Mammary epithelial cell (primary cell): ENCODE measurements at regions of chr11 and their contacts with region 1.

Region 1: DNA sequence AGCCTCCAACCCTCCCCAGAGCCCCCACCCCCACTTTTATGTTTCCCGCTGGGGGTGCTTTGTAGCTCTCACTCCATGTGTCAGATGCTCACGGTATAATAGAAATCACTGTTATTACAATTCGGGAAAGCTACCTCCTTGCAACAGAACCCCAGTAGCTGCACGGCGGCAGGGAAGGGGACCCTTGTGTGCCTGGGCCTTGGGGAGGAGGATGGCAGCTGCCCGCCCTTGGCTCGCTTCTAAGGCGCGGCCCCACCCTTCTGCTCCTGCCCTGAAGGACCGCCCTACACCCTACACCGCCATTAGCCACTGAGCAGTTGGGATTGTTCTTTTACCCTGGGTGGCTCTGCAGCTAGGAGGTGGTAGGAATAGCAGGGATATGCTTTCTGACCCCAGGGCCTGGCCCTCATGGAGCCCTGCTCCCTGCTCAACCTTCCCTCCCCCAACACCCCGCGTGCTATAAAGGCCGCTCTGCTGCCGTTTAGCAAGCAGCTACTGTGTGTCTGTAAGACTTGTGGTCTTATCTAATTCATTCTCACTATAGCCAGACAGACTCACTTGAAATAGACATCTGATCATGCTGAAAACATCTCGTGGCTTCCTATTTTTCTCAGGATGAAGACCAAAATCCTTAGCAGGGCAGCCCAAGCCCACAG is 219.7 kb downstream of the CEP164 start:
- DNase-seq: no peak
- H3K4me3 ChIP-seq: no peak overlapping the region
- H3K27ac ChIP-seq: no peak overlapping the region
- H3K4me1 ChIP-seq: no peaks in the 10 kb centered on the region
- H3K27me3 ChIP-seq: peaks cover 3% of the 10 kb centered on the region
- CTCF ChIP-seq: no peak

Region 2: DNA sequence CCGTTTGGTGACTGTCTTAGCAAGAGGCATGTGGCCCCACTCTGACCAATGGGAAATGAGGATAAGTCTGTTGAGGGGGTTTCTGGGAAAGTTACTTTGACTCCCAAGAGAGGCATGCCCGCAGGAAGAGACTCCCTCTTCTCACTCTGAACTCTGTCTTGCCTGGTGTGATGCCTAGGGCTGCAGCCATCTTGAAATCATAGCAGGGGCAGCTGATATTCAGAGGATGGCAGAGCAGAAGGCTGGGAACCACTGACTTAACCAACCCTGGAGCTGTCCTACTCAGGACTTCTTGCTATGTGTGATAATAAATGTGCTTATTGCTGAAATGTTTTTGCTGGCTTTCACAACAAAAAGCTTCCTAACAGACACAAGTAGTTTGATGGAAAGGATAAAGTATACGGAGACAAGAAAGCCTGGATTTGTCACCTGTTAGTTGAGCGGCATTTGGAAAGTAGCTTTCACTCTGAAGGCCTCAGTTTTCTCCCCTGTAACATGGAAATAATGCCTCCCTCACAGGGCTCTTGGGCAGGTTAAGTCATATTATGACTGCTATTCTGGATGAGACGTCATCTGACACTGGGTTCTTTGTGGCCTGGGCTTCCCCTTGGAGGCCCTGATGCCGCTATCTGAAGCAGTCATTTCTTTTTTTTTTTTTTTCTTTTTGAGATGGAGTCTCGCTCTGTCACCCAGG is 91.1 kb before region 1 on chr11:
- CTCF ChIA-PET with region 1: interaction called, 10 read pairs
- dilution Hi-C with region 1: no loop called
- in situ Hi-C with region 1: no loop called
- intact Hi-C with region 1: no loop called
- DNase-seq: no peak
- H3K4me3 ChIP-seq: no peak overlapping the region
- H3K27ac ChIP-seq: no peak overlapping the region
- H3K4me1 ChIP-seq: peaks cover 10% of the 10 kb centered on the region
- H3K27me3 ChIP-seq: no peaks in the 10 kb centered on the region
- CTCF ChIP-seq: no peak